ENCODE measurements at regions of chr15 and their contacts with region 1.

Region 1: DNA sequence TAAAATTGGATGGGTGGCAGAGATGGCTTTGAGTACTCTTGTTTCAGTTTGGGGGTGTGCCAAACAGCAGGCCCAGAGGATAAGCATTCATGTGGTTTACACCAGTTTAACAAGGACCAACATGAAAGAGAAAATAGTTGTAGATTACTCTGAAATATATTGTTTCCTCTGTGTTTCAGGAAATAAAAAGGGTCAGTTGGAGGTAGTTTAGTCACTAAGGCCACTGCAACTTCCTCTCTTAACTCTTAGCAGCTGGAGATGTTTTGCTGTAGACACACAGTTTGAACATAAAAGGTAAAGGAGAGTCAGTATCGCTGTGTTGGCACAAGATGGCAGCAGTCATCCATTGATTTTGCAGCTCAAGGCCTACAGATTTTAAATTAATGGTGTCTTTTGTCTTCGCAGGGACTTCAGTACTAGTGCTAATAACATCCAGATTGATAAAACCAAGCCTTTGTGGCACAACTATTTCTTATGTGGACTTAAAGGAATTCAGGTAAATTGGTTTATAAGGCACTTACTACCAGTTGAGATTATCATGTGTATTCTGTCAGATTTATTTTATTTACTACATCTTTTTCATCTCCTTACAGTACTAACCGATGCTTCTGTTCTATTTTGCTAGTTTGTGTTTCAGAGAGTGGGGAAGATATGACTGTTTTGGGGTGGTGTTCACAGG is 65.5 kb downstream of the GALK2 start:
- DNase-seq: peak in 4 of 5 donors; percentile 32 to 40 (median 36)
- ATAC-seq: peak in 3 of 4 donors; percentile 81 to 85 (median 82)
- H3K4me3 ChIP-seq: no peak overlapping the region
- H3K27ac ChIP-seq: peak overlapping the region in 4 of 12 donors; percentile 4 to 29 (median 18)
- H3K4me1 ChIP-seq: peaks cover 0 to 33% (median 11%) of the 10 kb centered on the region in 12 donors
- H3K27me3 ChIP-seq: no peaks in the 10 kb centered on the region
- CTCF ChIP-seq: peak; percentile 56 to 84 (median 76)
- POLR2A ChIP-seq: no peak

Region 2: GRCh38 chr15:49169880-49170597 is 65.5 kb before region 1 on chr15 and contains the start of gene GALK2:
- intact Hi-C with region 1: loop called in 1 of 10 experiments (anchors 10 kb)
- DNase-seq: peak; percentile 79 to 88 (median 82)
- ATAC-seq: peak; percentile 95 to 99 (median 98)
- H3K4me3 ChIP-seq: peak within 1 kb of the TSS; percentile 25 to 79 (median 68)
- H3K27ac ChIP-seq: peak within 1 kb of the TSS in 11 of 12 donors; percentile 41 to 85 (median 76)
- H3K4me1 ChIP-seq: peaks cover 0 to 38% (median 7%) of the 10 kb centered on the region in 12 donors
- H3K27me3 ChIP-seq: no peaks in the 10 kb centered on the region
- CTCF ChIP-seq: no peak
- POLR2A ChIP-seq: peak in 1 of 2 donors; percentile 51
- total RNA-seq, gene GALK2: 31.8 to 42.1 (median 35.2) TPM

Region 3: DNA sequence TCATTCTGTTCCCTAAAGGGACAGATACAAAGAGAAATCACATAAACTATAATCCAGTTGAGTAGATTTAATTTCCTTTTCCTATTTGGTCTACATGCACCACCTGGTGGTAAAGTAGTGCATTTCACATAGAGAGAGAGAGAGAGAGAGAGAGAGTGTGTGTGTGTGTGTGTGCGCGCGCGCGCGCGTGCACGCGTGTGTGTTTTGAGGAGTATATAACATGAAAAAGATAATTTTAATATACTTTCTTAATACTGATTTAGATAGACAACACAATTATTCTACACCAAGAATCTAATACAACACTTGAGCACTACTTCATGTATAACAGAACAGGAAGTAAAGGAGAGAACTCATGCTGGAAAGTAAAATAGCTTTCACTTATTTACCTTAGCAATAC is 186.4 kb after region 1 on chr15:
- intact Hi-C with region 1: loop called (anchors 1 to 5 kb)
- DNase-seq: peak in 3 of 5 donors; percentile 20 to 55 (median 25)
- ATAC-seq: peak in 3 of 4 donors; percentile 52 to 64 (median 62)
- H3K4me3 ChIP-seq: peak overlapping the region in 9 of 12 donors; percentile 19 to 62 (median 32)
- H3K27ac ChIP-seq: peak overlapping the region in 6 of 12 donors; percentile 63 to 77 (median 69)
- H3K4me1 ChIP-seq: peaks cover 0 to 9% (median 0%) of the 10 kb centered on the region in 12 donors
- H3K27me3 ChIP-seq: no peaks in the 10 kb centered on the region
- CTCF ChIP-seq: peak; percentile 50 to 84 (median 67)
- POLR2A ChIP-seq: no peak

Region 4: DNA sequence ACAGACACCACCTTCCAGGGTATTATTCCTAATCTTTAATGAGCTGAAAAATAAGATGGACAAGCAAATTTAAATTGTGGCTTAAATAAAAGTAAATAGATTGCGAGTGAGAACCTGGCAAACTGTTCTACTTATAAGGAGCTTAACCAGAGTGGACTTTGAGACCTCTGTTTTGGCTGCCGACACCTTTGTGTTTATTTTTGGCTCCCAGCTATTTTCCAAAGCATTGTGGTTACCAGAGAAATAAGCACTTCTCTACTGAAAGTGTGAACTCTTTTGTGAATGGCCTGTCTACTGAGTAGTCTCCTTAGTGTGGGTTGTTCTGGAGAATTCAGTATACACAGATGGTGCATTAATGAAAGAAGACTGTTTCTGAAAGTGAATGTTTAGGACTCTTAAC is 774.0 kb after region 1 on chr15:
- intact Hi-C with region 1: loop called in 7 of 10 experiments (anchors 5 to 10 kb)
- DNase-seq: no peak
- ATAC-seq: peak in 2 of 4 donors; percentile 39 to 69
- H3K4me3 ChIP-seq: no peak overlapping the region
- H3K27ac ChIP-seq: no peak overlapping the region
- H3K4me1 ChIP-seq: peaks cover 0 to 3% (median 0%) of the 10 kb centered on the region in 12 donors
- H3K27me3 ChIP-seq: no peaks in the 10 kb centered on the region
- CTCF ChIP-seq: no peak
- POLR2A ChIP-seq: no peak

Region 5: DNA sequence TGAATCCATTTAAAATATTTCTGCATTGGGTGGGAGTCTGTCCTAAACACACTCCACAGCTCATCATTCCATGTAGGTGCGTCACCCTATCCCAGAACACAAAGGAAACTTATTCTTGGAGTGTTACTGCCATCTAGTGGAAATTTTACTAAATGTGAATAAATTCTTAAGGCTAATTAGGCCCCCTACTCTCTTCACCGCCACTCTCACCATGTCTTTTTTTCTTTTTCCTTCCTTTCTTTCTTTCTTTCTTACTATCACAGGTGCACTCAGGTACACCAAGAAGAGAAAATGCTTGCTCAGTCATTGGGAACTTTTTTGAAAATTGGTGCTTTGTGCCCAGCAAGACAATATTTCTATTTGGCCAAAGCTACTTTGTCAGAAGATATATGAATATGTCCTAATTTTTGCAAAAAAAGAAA is 909.9 kb after region 1 on chr15:
- intact Hi-C with region 1: loop called in 8 of 10 experiments (anchors 5 to 10 kb)
- DNase-seq: no peak
- ATAC-seq: peak; percentile 58 to 91 (median 83)
- H3K4me3 ChIP-seq: no peak overlapping the region
- H3K27ac ChIP-seq: no peak overlapping the region
- H3K4me1 ChIP-seq: peaks cover 0 to 6% (median 0%) of the 10 kb centered on the region in 12 donors
- H3K27me3 ChIP-seq: no peaks in the 10 kb centered on the region
- CTCF ChIP-seq: peak; percentile 47 to 73 (median 61)
- POLR2A ChIP-seq: no peak

Measured in heart left ventricle (tissue), 16 donors.